HEK293 (cell line): ENCODE measurements at regions of chr9 and their contacts with region 1.

Region 1: GRCh38 chr9:137064027-137064879 is 6.1 kb downstream of the SAPCD2 start:
- H3K4me3 ChIP-seq: no peak overlapping the region
- H3K27ac ChIP-seq: no peak overlapping the region
- H3K4me1 ChIP-seq: peaks cover 3% of the 10 kb centered on the region; the same call in 1 of the 2 replicates
- CTCF ChIP-seq: peak; percentile 95

Region 2: DNA sequence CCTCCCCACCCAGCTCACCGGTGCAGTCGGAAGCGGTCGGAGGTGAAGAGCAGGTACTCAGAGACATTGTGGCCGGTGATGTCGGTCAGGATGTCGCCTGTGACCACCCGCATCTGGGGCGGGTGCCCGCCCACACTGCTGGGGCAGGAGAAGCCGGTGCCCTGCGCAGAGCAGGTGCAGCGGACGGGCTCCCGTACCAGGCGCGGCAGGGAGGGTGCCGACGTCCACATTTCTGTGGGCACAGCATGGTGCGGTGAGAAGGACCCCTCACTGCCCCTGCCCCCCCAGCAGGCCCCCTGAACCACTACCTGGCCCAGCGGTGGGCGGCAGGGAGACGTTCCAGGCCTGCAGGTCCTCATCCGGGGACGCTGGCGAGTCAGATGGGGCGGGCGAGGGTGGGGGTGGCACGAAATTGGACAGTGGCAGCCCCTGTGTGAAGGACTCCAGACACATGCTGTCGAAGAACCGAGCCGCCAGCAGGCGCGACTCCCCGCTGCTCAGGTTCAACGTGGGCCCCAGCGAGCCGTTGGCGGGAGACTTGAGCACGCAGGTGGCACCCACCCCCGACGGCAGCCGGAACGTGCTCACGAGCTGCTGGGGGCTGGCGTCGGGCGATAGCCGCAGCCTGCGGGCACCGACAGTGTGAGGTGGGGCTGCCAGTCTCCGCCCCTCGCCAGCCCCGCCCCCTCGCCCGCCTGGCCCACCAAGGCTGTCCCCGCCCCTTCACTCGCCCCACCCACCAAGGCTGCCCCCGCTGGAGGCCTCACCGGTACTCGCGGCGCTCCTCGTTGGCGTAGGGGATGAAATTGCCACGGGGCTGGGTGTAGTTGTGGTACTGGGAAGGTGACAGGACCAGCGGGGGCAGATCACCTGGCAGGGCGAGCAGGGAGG is 51.3 kb before region 1 on chr9:
- CTCF ChIA-PET with region 1: no interaction called
- POLR2A ChIA-PET with region 1: no interaction called
- H3K4me3 ChIP-seq: no peak overlapping the region
- H3K27ac ChIP-seq: no peak overlapping the region
- H3K4me1 ChIP-seq: no peaks in the 10 kb centered on the region
- CTCF ChIP-seq: no peak

Region 3: DNA sequence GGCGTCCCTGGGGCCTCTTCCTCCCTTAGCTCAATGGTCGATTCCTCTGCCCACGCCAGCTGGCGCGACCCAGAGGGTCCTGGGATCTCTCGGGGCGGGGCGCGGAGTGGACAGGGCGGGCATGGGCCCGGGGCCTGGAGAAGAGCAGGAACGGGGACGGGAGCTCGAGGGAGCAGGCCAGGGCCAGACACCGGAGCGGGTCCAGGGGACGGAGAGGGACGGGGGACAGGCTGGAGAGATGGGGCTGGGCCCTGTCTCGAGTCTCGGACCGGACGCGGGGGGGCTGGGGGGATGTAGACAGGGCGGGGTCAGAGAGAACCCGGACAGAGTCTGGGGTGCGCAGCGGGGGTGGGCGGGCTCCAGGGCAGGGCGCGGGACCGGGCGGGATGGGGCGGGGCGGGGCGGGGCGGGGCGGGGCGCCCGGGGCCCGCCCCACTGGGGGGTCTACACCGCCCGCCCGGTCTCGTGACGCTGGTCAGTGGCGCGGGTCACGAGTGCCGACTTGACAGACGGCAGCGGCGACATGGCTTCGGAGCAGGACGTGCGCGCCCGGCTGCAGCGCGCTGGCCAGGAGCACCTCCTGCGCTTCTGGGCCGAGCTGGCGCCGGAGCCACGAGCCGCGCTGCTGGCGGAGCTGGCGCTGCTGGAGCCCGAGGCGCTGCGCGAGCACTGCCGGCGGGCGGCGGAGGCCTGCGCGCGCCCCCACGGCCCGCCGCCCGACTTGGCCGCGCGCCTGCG is 12.9 kb after region 1 on chr9 and contains the start of gene UAP1L1:
- CTCF ChIA-PET with region 1: interaction called, 34 read pairs
- POLR2A ChIA-PET with region 1: interaction called, 137 read pairs
- H3K4me3 ChIP-seq: peak within 1 kb of the TSS; percentile 43
- H3K27ac ChIP-seq: peak within 1 kb of the TSS; percentile 46; the same call in 1 of the 2 replicates
- H3K4me1 ChIP-seq: no peaks in the 10 kb centered on the region; the same call in 1 of the 2 replicates
- CTCF ChIP-seq: no peak